ENCODE measurements at regions of chr15 and their contacts with region 1.

Region 1: DNA sequence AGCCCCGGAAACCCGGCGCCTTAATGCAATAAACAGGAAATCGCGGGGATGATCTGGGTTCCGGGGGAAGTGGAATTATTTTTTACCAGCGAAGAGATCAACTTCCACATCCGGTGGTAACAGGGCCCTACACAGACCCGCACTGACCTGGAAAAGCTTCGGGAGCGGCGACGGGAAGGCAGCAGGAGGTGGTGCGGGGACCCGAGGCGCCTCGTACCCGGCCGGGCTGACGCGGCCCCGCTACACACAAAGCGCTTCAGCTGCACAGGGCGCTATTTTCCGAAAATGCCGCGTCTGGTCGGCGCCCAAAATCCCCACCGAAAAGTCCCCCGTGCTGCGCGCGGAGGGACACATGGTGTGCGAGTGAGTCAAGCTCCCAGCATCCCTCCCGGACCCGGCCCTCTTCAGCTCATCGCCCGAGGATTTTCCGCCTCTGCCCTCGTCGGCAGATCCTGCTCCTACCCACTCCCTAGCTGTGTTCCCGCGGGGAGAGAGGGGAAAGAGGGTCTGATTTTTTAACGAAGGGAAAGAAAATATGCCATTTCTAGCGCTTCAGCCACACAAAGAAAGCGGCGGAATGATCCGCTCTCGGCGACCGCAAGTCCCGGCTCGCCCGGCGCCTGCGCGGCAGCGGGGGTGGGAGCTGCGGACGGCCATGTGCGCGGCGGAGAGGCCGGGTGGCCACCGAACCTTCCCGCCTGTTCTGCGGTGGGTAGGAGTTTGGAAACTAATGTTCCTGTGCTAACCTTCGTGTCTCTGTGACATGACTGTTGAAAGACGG is at the start of gene GABPB1:
- DNase-seq: peak; percentile 77 to 96 (median 88)
- ATAC-seq: peak; percentile 52 to 56
- H3K4me3 Mint-ChIP-seq: peak within 1 kb of the TSS; percentile 75 to 100 (median 95)
- H3K27ac Mint-ChIP-seq: peak within 1 kb of the TSS; percentile 97 to 100 (median 99)
- H3K4me1 Mint-ChIP-seq: peaks cover 30 to 65% (median 49%) of the 10 kb centered on the region in 4 donors
- H3K27me3 Mint-ChIP-seq: peaks cover 0 to 9% (median 0%) of the 10 kb centered on the region in 5 donors
- polyA plus RNA-seq, gene GABPB1: 20.6 to 29.1 (median 25.1) TPM

Region 2: GRCh38 chr15:50247819-50248655 is 107.0 kb before region 1 on chr15:
- POLR2A ChIA-PET with region 1: interaction called, 10 read pairs
- DNase-seq: peak in 9 of 10 donors; percentile 1 to 69 (median 27)
- ATAC-seq: peak; percentile 97 to 99
- H3K4me3 Mint-ChIP-seq: peak overlapping the region; percentile 63 to 86 (median 78)
- H3K27ac Mint-ChIP-seq: peak overlapping the region; percentile 89 to 98 (median 93)
- H3K4me1 Mint-ChIP-seq: peaks cover 6 to 25% (median 19%) of the 10 kb centered on the region in 4 donors
- H3K27me3 Mint-ChIP-seq: peaks cover 0 to under 1% (median 0%) of the 10 kb centered on the region in 5 donors

Region 3: DNA sequence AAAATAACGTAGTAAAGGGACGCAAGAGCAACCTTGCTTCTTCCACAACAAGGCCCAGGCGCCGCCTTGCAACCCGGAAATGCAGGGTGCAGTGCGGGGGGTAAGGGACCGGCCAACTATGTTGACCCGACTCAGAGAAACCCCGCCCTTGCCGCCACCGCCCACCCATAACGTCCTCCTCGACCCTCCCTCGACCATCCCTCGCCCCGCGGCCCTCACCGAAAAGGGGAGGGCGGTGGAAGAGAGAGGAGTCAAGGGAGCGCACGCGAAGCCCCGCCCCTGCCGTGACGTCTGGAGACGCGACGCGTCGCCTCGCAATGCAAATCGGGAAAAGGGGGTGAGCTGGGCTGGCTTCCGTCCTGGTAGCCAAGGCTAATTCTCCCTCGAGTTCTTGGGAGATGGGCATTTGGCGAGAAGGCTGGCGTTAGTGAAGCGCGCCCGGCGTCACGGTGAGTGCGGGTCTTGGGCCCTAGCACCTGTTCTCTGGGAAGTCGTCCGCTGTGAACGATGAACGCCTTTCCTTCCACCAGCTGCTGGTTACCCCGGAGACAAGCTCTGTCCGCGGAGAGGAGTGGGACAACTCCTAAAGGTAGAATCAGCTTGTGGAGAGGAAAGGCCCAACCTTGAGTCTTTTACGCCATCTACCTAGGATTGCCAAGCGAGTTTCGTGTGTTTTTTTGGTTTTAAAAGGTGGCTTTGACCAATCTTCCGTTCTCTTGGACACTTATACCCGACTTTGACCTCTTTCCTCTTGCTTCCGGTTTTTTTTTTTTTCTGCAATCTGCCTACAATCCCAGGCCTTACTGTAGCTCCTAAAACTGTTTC is 69.2 kb after region 1 on chr15 and contains the start of gene USP8:
- POLR2A ChIA-PET with region 1: interaction called, 97 read pairs
- DNase-seq: peak; percentile 86 to 95 (median 90)
- ATAC-seq: peak; percentile 90 to 91
- H3K4me3 Mint-ChIP-seq: peak within 1 kb of the TSS; percentile 92 to 100 (median 97)
- H3K27ac Mint-ChIP-seq: peak within 1 kb of the TSS; percentile 92 to 99 (median 97)
- H3K4me1 Mint-ChIP-seq: peaks cover 13 to 49% (median 40%) of the 10 kb centered on the region in 4 donors
- H3K27me3 Mint-ChIP-seq: no peaks in the 10 kb centered on the region
- polyA plus RNA-seq, gene USP8: 27.5 to 29.7 (median 28.7) TPM

Region 4: GRCh38 chr15:50908210-50909009 is 553.4 kb after region 1 on chr15 and contains the start of gene AP4E1:
- POLR2A ChIA-PET with region 1: interaction called, 22 read pairs
- DNase-seq: peak; percentile 91 to 97 (median 96)
- ATAC-seq: peak; percentile 60 to 63
- H3K4me3 Mint-ChIP-seq: peak within 1 kb of the TSS; percentile 87 to 99 (median 94)
- H3K27ac Mint-ChIP-seq: peak within 1 kb of the TSS; percentile 93 to 99 (median 98)
- H3K4me1 Mint-ChIP-seq: peaks cover 6 to 45% (median 30%) of the 10 kb centered on the region in 4 donors
- H3K27me3 Mint-ChIP-seq: no peaks in the 10 kb centered on the region
- polyA plus RNA-seq, gene AP4E1: 3.6 to 4.2 (median 3.7) TPM